CD4-positive, alpha-beta memory T cell (primary cell): ENCODE measurements at regions of chr2 and their contacts with region 1.

Region 1: DNA sequence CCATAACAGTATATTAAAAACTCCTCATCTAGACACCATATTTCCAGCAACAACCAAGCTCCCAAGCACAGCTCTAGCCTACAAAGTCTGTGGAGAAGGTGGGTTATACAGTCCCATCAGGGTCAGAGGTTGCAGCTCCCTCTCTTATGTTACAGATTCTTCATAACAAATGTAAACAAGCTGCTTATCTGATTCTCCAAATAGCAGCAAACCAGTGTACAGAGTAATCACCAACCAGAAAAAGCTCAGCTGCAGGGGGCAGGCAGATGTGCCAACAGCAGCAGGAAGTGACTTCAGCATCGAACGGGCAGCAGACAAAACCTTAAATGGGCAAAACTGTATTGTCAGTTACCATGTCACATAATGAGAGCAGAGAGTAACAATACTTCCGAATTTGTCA is 52.9 kb upstream of the NABP1 start:
- DNase-seq: peak; percentile 66 to 87 (median 83)
- H3K4me3 ChIP-seq: no peak overlapping the region
- H3K4me3 Mint-ChIP-seq: peak overlapping the region in 6 of 8 donors; percentile 31 to 68 (median 58)
- H3K27ac ChIP-seq: peak overlapping the region; percentile 48
- H3K27ac Mint-ChIP-seq: peak overlapping the region; percentile 77 to 97 (median 91)
- H3K4me1 ChIP-seq: peaks cover 71% of the 10 kb centered on the region
- H3K4me1 Mint-ChIP-seq: peaks cover 46 to 90% (median 68%) of the 10 kb centered on the region in 4 donors
- H3K27me3 ChIP-seq: no peaks in the 10 kb centered on the region
- H3K27me3 Mint-ChIP-seq: no peaks in the 10 kb centered on the region

Region 2: GRCh38 chr2:191637182-191638078 is 12.4 kb after region 1 on chr2:
- CTCF ChIA-PET with region 1: interaction called, 23 read pairs
- POLR2A ChIA-PET with region 1: interaction called, 76 read pairs
- intact Hi-C with region 1: no loop called
- DNase-seq: peak; percentile 33 to 52 (median 39)
- H3K4me3 ChIP-seq: peak overlapping the region; percentile 0 to 7
- H3K4me3 Mint-ChIP-seq: peak overlapping the region; percentile 51 to 80 (median 70)
- H3K27ac ChIP-seq: peak overlapping the region; percentile 36
- H3K27ac Mint-ChIP-seq: peak overlapping the region; percentile 84 to 92 (median 86)
- H3K4me1 ChIP-seq: peaks cover 54% of the 10 kb centered on the region
- H3K4me1 Mint-ChIP-seq: peaks cover 48 to 68% (median 53%) of the 10 kb centered on the region in 4 donors
- H3K27me3 ChIP-seq: no peaks in the 10 kb centered on the region
- H3K27me3 Mint-ChIP-seq: no peaks in the 10 kb centered on the region

Region 3: GRCh38 chr2:191959209-191959608 is 334.2 kb after region 1 on chr2:
- CTCF ChIA-PET with region 1: no interaction called
- POLR2A ChIA-PET with region 1: no interaction called
- intact Hi-C with region 1: no loop called
- DNase-seq: no peak
- H3K4me3 ChIP-seq: no peak overlapping the region
- H3K4me3 Mint-ChIP-seq: no peak overlapping the region
- H3K27ac ChIP-seq: no peak overlapping the region
- H3K27ac Mint-ChIP-seq: no peak overlapping the region
- H3K4me1 ChIP-seq: no peaks in the 10 kb centered on the region
- H3K4me1 Mint-ChIP-seq: no peaks in the 10 kb centered on the region
- H3K27me3 ChIP-seq: no peaks in the 10 kb centered on the region
- H3K27me3 Mint-ChIP-seq: peaks cover 2 to 4% of the 10 kb centered on the region in 2 donors